ENCODE measurements at regions of chr18 and their contacts with region 1.

Region 1: DNA sequence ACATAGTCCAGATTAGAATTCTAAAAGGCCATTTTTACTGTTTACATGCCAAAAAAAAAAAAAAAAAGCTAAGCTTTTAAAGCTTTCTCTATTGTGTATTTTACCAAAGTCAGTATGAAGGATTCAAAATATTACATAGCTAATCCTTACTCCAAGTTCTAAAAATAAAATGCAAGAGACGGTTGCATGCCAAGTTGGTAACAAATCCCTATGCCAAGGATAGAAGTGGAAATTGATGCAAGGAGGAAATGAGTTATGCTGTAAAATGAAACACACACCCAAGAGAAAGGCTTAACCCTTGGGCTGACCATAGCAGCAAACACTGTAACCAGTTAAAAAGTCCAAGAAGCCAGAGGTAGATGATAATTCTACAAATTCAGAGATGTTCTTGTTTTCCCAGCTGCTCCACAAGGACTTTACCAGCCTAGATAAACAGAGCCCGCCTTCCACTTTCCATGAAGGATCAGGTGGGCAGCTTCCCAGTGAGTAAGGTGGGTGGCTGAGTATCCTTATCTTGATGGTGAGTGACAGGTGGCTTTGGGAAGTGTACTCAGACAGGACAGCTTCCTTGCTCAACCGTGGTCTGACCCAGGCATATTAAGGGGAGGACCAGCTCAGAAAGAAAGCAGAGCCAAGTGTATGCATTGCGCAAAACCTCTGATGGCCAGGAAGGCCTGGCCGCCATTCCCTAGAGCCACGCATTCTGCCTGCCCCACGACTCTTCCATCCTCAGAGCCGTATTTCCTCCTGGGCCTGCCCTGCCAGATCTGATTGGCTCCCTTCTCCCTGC is 34.4 kb downstream of the ATP8B1 start:
- DNase-seq: peak; percentile 38 to 58
- ATAC-seq: peak; percentile 75
- H3K4me3 ChIP-seq: no peak overlapping the region
- H3K27ac ChIP-seq: peak overlapping the region; percentile 80 to 88 (median 83)
- H3K4me1 ChIP-seq: peaks cover 44 to 72% of the 10 kb centered on the region in 2 donors
- H3K27me3 ChIP-seq: no peaks in the 10 kb centered on the region
- CTCF ChIP-seq: no peak
- POLR2A ChIP-seq: no peak

Region 2: GRCh38 chr18:58314284-58314683 is 545.6 kb after region 1 on chr18:
- in situ Hi-C with region 1: no loop called
- intact Hi-C with region 1: loop called (anchors 10 kb)
- DNase-seq: peak; percentile 82 to 85
- ATAC-seq: peak; percentile 79 to 81
- H3K4me3 ChIP-seq: peak overlapping the region in 1 of 4 donors; percentile 13
- H3K27ac ChIP-seq: peak overlapping the region; percentile 77 to 91 (median 80)
- H3K4me1 ChIP-seq: peaks cover 73 to 81% of the 10 kb centered on the region in 2 donors
- H3K27me3 ChIP-seq: no peaks in the 10 kb centered on the region
- CTCF ChIP-seq: no peak
- POLR2A ChIP-seq: peak; percentile 53 to 59